Activated CD4-positive, alpha-beta T cell treated with anti-CD3 and anti-CD28 coated beads for 36 hours (primary cell): ENCODE measurements at regions of chr3 and their contacts with region 1.

Region 1: GRCh38 chr3:14921078-14921616 is 26.2 kb upstream of the NR2C2 start:
- DNase-seq: peak; percentile 89
- ATAC-seq: peak; percentile 95
- H3K4me3 Mint-ChIP-seq: no peak overlapping the region
- H3K27ac Mint-ChIP-seq: no peak overlapping the region
- H3K4me1 Mint-ChIP-seq: no peaks in the 10 kb centered on the region
- H3K27me3 Mint-ChIP-seq: no peaks in the 10 kb centered on the region

Region 2: GRCh38 chr3:14508961-14509795 is 412.0 kb before region 1 on chr3:
- CTCF ChIA-PET with region 1: interaction called, 3 read pairs
- POLR2A ChIA-PET with region 1: no interaction called
- intact Hi-C with region 1: loop called (anchors 1 to 5 kb)
- DNase-seq: peak; percentile 87
- ATAC-seq: peak; percentile 91
- H3K4me3 Mint-ChIP-seq: no peak overlapping the region
- H3K27ac Mint-ChIP-seq: no peak overlapping the region
- H3K4me1 Mint-ChIP-seq: peaks cover 2% of the 10 kb centered on the region
- H3K27me3 Mint-ChIP-seq: peaks cover 4% of the 10 kb centered on the region

Region 3: DNA sequence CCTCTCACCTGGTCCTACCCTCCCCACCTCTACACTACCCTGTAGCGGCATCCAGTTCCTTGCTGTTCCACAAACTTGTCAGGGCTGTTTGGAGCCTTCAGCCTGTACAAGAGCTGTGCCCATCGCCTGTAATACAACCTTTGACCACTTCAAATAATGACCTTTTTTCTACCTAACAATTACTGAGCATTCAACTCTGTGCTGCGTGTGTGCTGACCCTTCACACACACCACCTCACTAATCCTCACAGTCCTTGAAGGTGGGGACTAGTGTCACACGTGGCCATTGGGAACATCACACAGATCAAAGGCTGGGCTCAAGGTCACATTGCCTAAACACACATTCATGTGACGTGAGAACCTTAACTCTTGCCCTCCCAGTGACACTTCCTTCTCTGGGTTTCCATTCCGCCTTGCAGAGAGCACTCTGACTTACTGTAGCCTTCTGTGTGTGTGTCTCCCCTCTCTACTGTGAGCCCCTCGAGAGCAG is 243.1 kb before region 1 on chr3:
- CTCF ChIA-PET with region 1: interaction called, 12 read pairs
- POLR2A ChIA-PET with region 1: no interaction called
- intact Hi-C with region 1: loop called (anchors 1 kb)
- DNase-seq: no peak
- ATAC-seq: no peak
- H3K4me3 Mint-ChIP-seq: no peak overlapping the region
- H3K27ac Mint-ChIP-seq: no peak overlapping the region
- H3K4me1 Mint-ChIP-seq: no peaks in the 10 kb centered on the region
- H3K27me3 Mint-ChIP-seq: no peaks in the 10 kb centered on the region

Region 4: DNA sequence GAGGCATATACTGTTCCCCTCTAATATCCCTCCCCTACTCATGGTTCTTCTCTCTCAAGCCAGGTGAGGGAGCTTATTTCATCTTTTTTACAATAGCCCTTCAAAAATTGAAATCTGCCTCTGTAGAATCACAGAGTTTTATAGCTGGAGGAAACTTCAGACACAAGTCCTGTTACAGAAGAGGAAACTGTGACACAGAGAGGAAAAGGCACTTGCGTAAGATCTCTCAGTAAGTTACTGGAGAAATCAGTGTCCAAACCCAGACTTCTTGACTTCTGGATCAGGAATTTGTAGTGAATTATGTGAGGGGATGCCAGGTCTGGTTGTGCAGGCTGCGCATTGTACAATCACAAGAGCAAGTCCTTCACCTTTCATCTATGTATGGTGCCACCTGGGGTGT is 97.8 kb before region 1 on chr3:
- CTCF ChIA-PET with region 1: no interaction called
- POLR2A ChIA-PET with region 1: no interaction called
- intact Hi-C with region 1: no loop called
- DNase-seq: no peak
- ATAC-seq: no peak
- H3K4me3 Mint-ChIP-seq: no peak overlapping the region
- H3K27ac Mint-ChIP-seq: no peak overlapping the region
- H3K4me1 Mint-ChIP-seq: no peaks in the 10 kb centered on the region
- H3K27me3 Mint-ChIP-seq: peaks cover 5% of the 10 kb centered on the region

Region 5: GRCh38 chr3:14891135-14892132 is 29.7 kb before region 1 on chr3:
- CTCF ChIA-PET with region 1: interaction called, 11 read pairs
- POLR2A ChIA-PET with region 1: no interaction called
- intact Hi-C with region 1: no loop called
- DNase-seq: no peak
- ATAC-seq: no peak
- H3K4me3 Mint-ChIP-seq: no peak overlapping the region
- H3K27ac Mint-ChIP-seq: no peak overlapping the region
- H3K4me1 Mint-ChIP-seq: peaks cover 2% of the 10 kb centered on the region
- H3K27me3 Mint-ChIP-seq: peaks cover 3% of the 10 kb centered on the region

Region 6: GRCh38 chr3:15045667-15046066 is 124.5 kb after region 1 on chr3:
- CTCF ChIA-PET with region 1: interaction called, 5 read pairs
- POLR2A ChIA-PET with region 1: no interaction called
- intact Hi-C with region 1: loop called (anchors 5 kb)
- DNase-seq: no peak
- ATAC-seq: no peak
- H3K4me3 Mint-ChIP-seq: no peak overlapping the region
- H3K27ac Mint-ChIP-seq: peak overlapping the region; percentile 28
- H3K4me1 Mint-ChIP-seq: peaks cover 32% of the 10 kb centered on the region
- H3K27me3 Mint-ChIP-seq: no peaks in the 10 kb centered on the region